ENCODE measurements at regions of chr5 and their contacts with region 1.

Region 1: GRCh38 chr5:6576861-6577501 is 55.9 kb downstream of the NSUN2 start:
- DNase-seq: peak; percentile 54
- H3K4me3 Mint-ChIP-seq: no peak overlapping the region
- H3K27ac Mint-ChIP-seq: no peak overlapping the region
- H3K4me1 Mint-ChIP-seq: no peaks in the 10 kb centered on the region
- H3K27me3 Mint-ChIP-seq: peaks cover 49% of the 10 kb centered on the region
- CTCF ChIP-seq: peak; percentile 65

Region 2: DNA sequence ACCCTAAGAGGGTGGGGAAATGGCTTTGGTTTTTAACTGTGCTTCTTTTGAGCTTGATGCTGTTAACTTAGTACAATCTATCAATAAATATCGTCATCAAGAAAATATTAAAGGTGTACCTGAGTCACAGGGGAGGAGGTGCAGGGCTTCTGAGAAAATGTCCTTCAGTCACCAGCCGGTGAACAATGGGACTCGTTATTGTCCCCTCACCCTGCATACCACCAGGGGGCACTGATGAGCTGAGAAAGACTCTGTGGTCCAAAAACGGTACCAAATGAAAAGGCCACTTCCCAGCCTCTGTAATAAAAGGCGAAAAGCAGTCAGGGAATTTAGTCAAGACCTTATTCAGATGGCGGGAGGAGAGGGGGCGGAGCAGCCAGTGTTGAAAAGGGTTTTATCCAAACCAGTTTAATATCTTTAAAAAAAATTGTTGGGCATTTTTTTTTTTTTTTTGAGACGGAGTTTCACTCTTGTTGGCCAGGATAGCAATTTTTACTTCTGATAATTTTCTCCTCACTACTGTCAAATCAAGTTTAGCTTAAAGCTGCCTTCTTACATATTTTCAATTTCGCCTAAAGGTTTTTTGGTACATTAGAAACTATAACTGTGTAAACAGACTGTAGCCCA is 1708.8 kb before region 1 on chr5:
- CTCF ChIA-PET with region 1: no interaction called
- POLR2A ChIA-PET with region 1: no interaction called
- intact Hi-C with region 1: loop called (anchors 10 kb)
- DNase-seq: peak; percentile 71
- H3K4me3 Mint-ChIP-seq: peak overlapping the region; percentile 35
- H3K27ac Mint-ChIP-seq: no peak overlapping the region
- H3K4me1 Mint-ChIP-seq: peaks cover 8% of the 10 kb centered on the region
- H3K27me3 Mint-ChIP-seq: no peaks in the 10 kb centered on the region
- CTCF ChIP-seq: peak; percentile 81

Region 3: DNA sequence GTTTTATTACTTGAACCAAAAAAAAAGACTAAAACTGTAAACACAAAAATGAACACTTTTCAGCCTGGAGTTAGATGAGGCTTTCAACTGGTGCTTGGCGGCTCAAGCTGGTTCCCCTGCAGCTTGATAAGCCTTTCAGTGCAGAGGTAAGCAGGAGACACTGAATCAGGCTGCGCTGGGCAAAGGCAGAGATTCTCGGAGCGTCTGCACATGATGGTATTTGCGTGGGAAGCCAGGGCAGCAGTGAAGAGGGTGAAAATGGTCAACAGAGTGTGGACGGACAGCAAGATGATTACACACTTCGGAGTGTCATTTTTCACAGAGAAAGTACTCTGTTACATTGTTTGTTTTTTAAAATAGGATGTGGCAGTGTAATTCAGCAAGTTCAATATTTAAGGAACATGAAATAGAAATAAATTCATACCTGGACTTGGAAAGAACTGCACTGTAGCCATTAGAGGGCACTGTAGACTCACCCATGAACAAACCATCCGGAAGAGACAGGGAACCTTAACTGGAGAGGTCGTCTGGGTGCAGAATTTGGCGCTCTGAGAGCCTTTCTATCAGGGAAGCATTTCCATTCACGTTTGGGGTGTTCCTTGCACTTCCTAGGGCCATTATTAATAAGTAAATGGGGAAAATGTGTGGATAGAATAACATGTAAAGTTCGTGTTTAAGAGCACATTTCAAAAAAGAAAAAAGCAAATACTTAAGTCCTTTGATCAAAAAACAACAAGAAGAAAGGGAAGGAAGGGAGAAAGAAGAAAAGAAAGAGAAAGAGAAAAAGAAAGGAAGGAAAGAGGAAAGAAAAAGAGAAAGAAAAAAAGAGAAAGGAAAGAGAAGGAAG is 1084.7 kb before region 1 on chr5:
- CTCF ChIA-PET with region 1: interaction called, 30 read pairs
- POLR2A ChIA-PET with region 1: interaction called, 3 read pairs
- intact Hi-C with region 1: loop called (anchors 1 kb)
- DNase-seq: peak; percentile 69
- H3K4me3 Mint-ChIP-seq: peak overlapping the region; percentile 11
- H3K27ac Mint-ChIP-seq: no peak overlapping the region
- H3K4me1 Mint-ChIP-seq: peaks cover 7% of the 10 kb centered on the region
- H3K27me3 Mint-ChIP-seq: no peaks in the 10 kb centered on the region
- CTCF ChIP-seq: peak; percentile 64

Region 4: GRCh38 chr5:5979377-5980079 is 597.5 kb before region 1 on chr5:
- CTCF ChIA-PET with region 1: no interaction called
- POLR2A ChIA-PET with region 1: no interaction called
- intact Hi-C with region 1: loop called (anchors 10 kb)
- DNase-seq: no peak
- H3K4me3 Mint-ChIP-seq: no peak overlapping the region
- H3K27ac Mint-ChIP-seq: no peak overlapping the region
- H3K4me1 Mint-ChIP-seq: peaks cover 5% of the 10 kb centered on the region
- H3K27me3 Mint-ChIP-seq: no peaks in the 10 kb centered on the region
- CTCF ChIP-seq: no peak

Region 5: DNA sequence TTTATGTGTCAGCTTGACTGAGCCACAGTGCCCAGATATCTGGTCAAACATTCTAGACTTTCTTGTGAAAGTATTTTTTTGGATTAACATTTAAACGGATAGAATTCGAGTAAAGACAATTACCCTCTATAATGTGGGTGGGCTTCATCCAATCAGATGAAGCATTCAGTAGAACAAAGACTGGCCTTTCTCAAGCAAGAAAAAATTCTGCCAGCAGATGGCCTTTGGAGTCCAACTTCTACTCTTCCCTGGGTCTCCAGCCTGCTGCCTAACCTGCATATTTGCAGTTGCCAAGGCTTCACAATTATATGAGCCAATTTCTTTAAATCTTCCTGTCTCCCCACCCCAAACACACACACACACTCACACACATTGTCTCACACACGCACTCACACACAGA is 285.0 kb before region 1 on chr5:
- CTCF ChIA-PET with region 1: interaction called, 7 read pairs
- POLR2A ChIA-PET with region 1: no interaction called
- intact Hi-C with region 1: loop called (anchors 1 kb)
- DNase-seq: peak; percentile 26
- H3K4me3 Mint-ChIP-seq: no peak overlapping the region
- H3K27ac Mint-ChIP-seq: no peak overlapping the region
- H3K4me1 Mint-ChIP-seq: no peaks in the 10 kb centered on the region
- H3K27me3 Mint-ChIP-seq: peaks cover 57% of the 10 kb centered on the region
- CTCF ChIP-seq: peak; percentile 19

Region 6: GRCh38 chr5:6377905-6378765 is 198.8 kb before region 1 on chr5 and contains the start of gene MED10:
- CTCF ChIA-PET with region 1: interaction called, 3 read pairs
- POLR2A ChIA-PET with region 1: no interaction called
- intact Hi-C with region 1: loop called (anchors 5 kb)
- DNase-seq: peak; percentile 92
- H3K4me3 Mint-ChIP-seq: peak within 1 kb of the TSS; percentile 99
- H3K27ac Mint-ChIP-seq: peak within 1 kb of the TSS; percentile 98
- H3K4me1 Mint-ChIP-seq: peaks cover 14% of the 10 kb centered on the region
- H3K27me3 Mint-ChIP-seq: no peaks in the 10 kb centered on the region
- CTCF ChIP-seq: no peak
- total RNA-seq, gene MED10: 84.9 and 85.1 TPM in 2 replicates

Region 7: DNA sequence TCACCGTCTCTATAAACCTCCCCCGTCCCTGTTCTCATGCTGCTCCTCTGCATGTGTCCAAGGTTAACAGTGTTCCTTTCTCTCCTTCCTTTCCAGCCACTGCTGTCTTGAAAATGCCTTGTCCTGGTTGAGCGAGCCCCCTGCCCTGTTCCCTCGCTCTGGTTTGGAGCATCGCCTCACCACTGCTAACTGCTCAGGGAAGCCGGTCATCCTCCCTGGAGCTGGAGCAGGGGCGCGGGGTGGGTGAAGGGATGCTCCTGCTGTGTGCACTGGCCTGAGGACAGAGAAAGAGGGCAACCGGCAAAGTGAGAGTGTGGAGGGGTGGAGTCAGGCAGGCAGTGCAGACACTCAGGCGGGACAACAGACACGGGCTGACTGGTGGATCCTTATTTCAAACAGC is 108.9 kb before region 1 on chr5:
- CTCF ChIA-PET with region 1: no interaction called
- POLR2A ChIA-PET with region 1: no interaction called
- intact Hi-C with region 1: no loop called
- DNase-seq: no peak
- H3K4me3 Mint-ChIP-seq: no peak overlapping the region
- H3K27ac Mint-ChIP-seq: no peak overlapping the region
- H3K4me1 Mint-ChIP-seq: no peaks in the 10 kb centered on the region
- H3K27me3 Mint-ChIP-seq: peaks cover 14% of the 10 kb centered on the region
- CTCF ChIP-seq: no peak

Region 8: GRCh38 chr5:6598351-6598900 is 21.4 kb after region 1 on chr5:
- CTCF ChIA-PET with region 1: no interaction called
- POLR2A ChIA-PET with region 1: no interaction called
- intact Hi-C with region 1: no loop called
- DNase-seq: no peak
- H3K4me3 Mint-ChIP-seq: no peak overlapping the region
- H3K27ac Mint-ChIP-seq: no peak overlapping the region
- H3K4me1 Mint-ChIP-seq: peaks cover under 1% of the 10 kb centered on the region
- H3K27me3 Mint-ChIP-seq: no peaks in the 10 kb centered on the region
- CTCF ChIP-seq: no peak

Measured in MCF 10A (cell line).